ENCODE measurements at regions of chr16 and their contacts with region 1.

Region 1: GRCh38 chr16:2071454-2072202 is 23.8 kb downstream of the TSC2 start:
- DNase-seq: no peak
- H3K4me3 ChIP-seq: no peak overlapping the region
- H3K27ac ChIP-seq: no peak overlapping the region
- H3K4me1 ChIP-seq: no peaks in the 10 kb centered on the region
- H3K27me3 ChIP-seq: no peaks in the 10 kb centered on the region
- CTCF ChIP-seq: no peak
- EP300 ChIP-seq: no peak
- POLR2A ChIP-seq: no peak
- RAD21 ChIP-seq: peak in 1 of 2 experiments; percentile 19; a peak in 1 of 4 replicates

Region 2: DNA sequence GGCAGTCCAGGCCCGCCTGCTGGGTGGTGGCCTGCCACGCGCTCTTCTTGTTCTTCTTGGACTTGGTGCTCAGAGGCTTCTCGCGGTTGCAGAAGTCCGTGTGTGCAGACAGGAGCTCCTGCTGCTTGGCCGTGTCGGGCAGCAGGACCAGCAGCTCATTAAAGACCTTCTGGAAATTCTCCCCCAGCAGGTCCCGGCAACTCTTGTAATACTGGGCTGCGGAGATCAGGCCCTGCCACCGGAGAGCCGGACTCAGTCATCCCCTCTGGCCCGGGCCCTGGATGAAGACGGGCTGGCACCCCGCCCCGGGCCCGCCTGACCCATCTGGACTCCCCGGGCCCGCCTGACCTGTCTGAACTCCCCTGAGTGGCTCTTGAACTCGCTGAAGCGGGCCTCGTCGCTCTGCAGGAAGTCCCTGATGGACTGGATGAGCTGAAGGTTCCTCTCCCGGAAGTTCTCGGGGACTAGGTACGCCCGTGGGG is 73.2 kb before region 1 on chr16:
- CTCF ChIA-PET with region 1: no interaction called
- POLR2A ChIA-PET with region 1: no interaction called
- DNase-seq: no peak
- H3K4me3 ChIP-seq: no peak overlapping the region
- H3K27ac ChIP-seq: no peak overlapping the region
- H3K4me1 ChIP-seq: peaks cover 0 to 2% (median under 1%) of the 10 kb centered on the region in 4 experiments; a peak in 3 of 7 replicates
- H3K27me3 ChIP-seq: peaks cover 0 to under 1% (median 0%) of the 10 kb centered on the region in 4 experiments; a peak in 1 of 7 replicates
- CTCF ChIP-seq: no peak
- EP300 ChIP-seq: no peak
- POLR2A ChIP-seq: no peak
- RAD21 ChIP-seq: no peak

Region 3: DNA sequence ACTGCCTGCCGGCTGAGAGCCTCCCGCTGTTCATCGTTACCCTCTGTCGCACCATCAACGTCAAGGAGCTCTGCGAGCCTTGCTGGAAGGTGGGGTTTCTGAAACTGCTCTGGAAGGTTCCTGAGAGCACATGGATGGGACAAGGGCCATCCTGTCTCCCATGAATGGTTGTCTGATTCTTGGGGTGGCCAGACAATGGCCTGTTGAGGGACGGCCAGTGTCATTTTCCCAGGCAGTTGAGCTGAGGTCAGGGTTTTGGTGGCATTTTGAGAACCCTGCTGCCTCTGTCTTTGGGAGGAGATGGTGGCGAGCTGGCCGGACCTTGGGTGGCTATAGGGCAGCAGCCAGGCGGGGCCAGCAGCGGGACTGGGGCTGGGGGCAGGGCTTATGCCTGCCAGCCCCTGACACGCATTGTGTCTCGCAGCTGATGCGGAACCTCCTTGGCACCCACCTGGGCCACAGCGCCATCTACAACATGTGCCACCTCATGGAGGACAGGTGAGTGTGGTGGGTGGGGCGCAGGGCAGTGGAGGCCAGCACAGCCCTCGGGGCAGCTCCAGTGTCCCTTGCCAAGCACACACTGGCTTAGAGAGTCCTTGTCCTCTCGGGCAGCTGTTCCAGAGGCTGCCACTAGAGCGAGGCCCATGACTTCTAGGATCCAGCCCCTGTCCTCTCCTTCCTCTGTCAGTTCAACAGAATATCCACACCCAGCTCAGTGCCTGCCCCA is 14.8 kb before region 1 on chr16:
- CTCF ChIA-PET with region 1: interaction called, 15 read pairs
- POLR2A ChIA-PET with region 1: interaction called, 6 read pairs
- DNase-seq: no peak
- H3K4me3 ChIP-seq: no peak overlapping the region
- H3K27ac ChIP-seq: no peak overlapping the region; the same call in 1 of the 2 replicates
- H3K4me1 ChIP-seq: no peaks in the 10 kb centered on the region
- H3K27me3 ChIP-seq: no peaks in the 10 kb centered on the region
- CTCF ChIP-seq: peak in 2 of 3 experiments; percentile 43 to 53; a peak in 3 of 4 replicates
- EP300 ChIP-seq: no peak
- POLR2A ChIP-seq: no peak
- RAD21 ChIP-seq: peak; percentile 15 to 17; a peak in 2 of 4 replicates

Region 4: GRCh38 chr16:2082160-2082982 is 10.7 kb after region 1 on chr16:
- CTCF ChIA-PET with region 1: interaction called, 10 read pairs
- POLR2A ChIA-PET with region 1: interaction called, 11 read pairs
- DNase-seq: no peak
- H3K4me3 ChIP-seq: no peak overlapping the region
- H3K27ac ChIP-seq: no peak overlapping the region
- H3K4me1 ChIP-seq: no peaks in the 10 kb centered on the region
- H3K27me3 ChIP-seq: no peaks in the 10 kb centered on the region
- CTCF ChIP-seq: no peak
- EP300 ChIP-seq: no peak
- POLR2A ChIP-seq: no peak
- RAD21 ChIP-seq: no peak

Region 5: DNA sequence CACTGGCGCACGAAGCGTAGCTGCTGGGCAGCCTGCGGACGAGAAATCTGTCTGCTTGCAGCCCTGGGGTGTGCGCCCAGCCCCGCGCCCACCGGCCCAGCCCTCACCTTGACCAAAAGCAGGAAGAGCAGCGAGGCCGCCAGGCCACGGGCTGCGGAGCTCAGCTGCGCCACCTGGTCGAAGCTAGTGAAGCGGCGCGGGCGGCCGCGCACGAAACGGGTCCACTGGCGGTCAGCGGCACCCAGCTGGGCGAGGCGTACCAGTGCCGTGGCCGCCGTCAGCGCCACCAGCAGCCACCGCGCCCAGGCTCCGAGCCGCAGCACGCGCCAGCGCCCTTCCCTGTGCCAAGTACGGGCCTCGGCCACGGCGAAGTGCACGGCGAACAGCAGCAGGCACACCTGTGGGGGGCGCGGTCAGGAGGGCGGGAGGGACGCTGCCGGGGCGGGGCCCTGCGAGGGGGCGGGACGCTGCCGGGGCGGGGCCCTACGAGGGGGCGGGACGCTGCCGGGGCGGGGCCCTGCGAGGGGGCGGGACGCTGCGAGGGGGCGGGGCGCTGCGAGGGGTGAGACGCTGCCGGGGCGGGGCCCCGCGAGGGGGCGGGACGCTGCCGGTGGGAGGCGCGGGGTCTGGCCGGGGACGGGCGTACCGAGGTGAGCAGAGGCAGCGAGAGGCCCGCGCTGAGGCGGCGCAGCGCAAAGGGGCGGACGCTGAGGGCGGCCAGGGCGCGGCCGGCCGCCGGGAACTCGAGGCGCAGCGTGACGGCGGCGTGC is 19.3 kb after region 1 on chr16:
- CTCF ChIA-PET with region 1: interaction called, 10 read pairs
- POLR2A ChIA-PET with region 1: interaction called, 50 read pairs
- DNase-seq: peak; percentile 59 to 97
- H3K4me3 ChIP-seq: peak overlapping the region; percentile 38 to 72 (median 45)
- H3K27ac ChIP-seq: no peak overlapping the region
- H3K4me1 ChIP-seq: peaks cover 0 to 12% (median 9%) of the 10 kb centered on the region in 4 experiments; a peak in 5 of 7 replicates
- H3K27me3 ChIP-seq: no peaks in the 10 kb centered on the region
- CTCF ChIP-seq: peak in 2 of 3 experiments; percentile 68 to 69; a peak in 3 of 4 replicates
- EP300 ChIP-seq: no peak
- POLR2A ChIP-seq: no peak
- RAD21 ChIP-seq: peak; percentile 46 to 60